Mammary epithelial cell (primary cell): ENCODE measurements at regions of chr22 and their contacts with region 1.

Region 1: DNA sequence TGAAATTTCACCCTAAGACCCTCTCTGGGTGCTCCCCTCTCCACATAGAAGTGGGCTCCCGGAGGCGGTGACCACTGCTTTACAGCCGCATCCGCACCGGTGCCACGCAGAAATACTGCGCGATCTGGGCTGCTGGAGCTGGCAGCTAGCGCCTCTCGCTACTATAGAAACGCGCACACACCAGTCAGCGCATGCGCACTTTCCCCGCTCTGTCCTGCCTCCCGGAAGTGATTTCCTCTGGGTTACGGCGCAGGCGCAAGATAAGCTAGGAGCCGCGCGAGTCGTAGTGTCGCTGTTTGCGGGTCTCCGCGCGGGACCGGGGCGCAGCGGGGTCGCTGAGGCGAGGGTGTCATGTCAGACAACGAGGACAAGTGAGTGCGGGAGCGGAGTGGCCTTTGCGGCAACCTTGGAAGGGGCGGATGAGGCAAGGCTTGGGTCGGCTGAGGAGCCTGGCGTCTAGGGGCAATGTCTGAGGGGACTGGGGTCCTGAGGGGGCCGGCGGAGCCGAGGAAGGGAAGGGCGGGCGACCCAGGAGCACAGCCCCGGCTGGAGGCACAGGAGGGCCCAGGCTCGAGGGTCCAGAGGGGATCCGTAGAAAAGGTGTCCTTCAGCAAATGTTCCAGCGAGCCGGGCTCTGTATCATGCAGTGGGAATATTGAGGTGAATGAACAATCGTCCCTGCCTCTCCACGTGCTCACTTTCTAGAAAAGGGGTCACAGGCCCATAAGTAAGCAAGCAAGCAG is at the starts of genes C22orf23 and POLR2F:
- DNase-seq: peak; percentile 89
- H3K4me3 ChIP-seq: peak within 1 kb of the TSS; percentile 67 to 83 (median 71)
- H3K27ac ChIP-seq: peak within 1 kb of the TSS; percentile 57
- H3K4me1 ChIP-seq: peaks cover 21% of the 10 kb centered on the region
- H3K27me3 ChIP-seq: no peaks in the 10 kb centered on the region
- CTCF ChIP-seq: no peak
- total RNA-seq, gene C22orf23: not detected
- total RNA-seq, gene POLR2F: 20.7 to 89.6 TPM

Region 2: GRCh38 chr22:37905534-37906363 is 47.9 kb before region 1 on chr22 and contains the start of gene MICALL1:
- CTCF ChIA-PET with region 1: no interaction called
- dilution Hi-C with region 1: no loop called
- in situ Hi-C with region 1: no loop called
- intact Hi-C with region 1: loop called (anchors 5 kb)
- DNase-seq: peak; percentile 87
- H3K4me3 ChIP-seq: peak within 1 kb of the TSS; percentile 72 to 93 (median 87)
- H3K27ac ChIP-seq: peak within 1 kb of the TSS; percentile 95
- H3K4me1 ChIP-seq: peaks cover 48% of the 10 kb centered on the region
- H3K27me3 ChIP-seq: no peaks in the 10 kb centered on the region
- CTCF ChIP-seq: no peak
- total RNA-seq, gene MICALL1: 247 to 249 TPM

Region 3: GRCh38 chr22:38009000-38009806 is 55.6 kb after region 1 on chr22:
- CTCF ChIA-PET with region 1: no interaction called
- dilution Hi-C with region 1: no loop called
- in situ Hi-C with region 1: no loop called
- intact Hi-C with region 1: no loop called
- DNase-seq: no peak
- H3K4me3 ChIP-seq: no peak overlapping the region
- H3K27ac ChIP-seq: no peak overlapping the region
- H3K4me1 ChIP-seq: no peaks in the 10 kb centered on the region
- H3K27me3 ChIP-seq: no peaks in the 10 kb centered on the region
- CTCF ChIP-seq: no peak

Region 4: GRCh38 chr22:38034274-38034882 is 80.8 kb after region 1 on chr22:
- CTCF ChIA-PET with region 1: interaction called, 4 read pairs
- dilution Hi-C with region 1: loop called (anchors 5 kb)
- in situ Hi-C with region 1: no loop called
- intact Hi-C with region 1: no loop called
- DNase-seq: peak; percentile 83
- H3K4me3 ChIP-seq: no peak overlapping the region
- H3K27ac ChIP-seq: no peak overlapping the region
- H3K4me1 ChIP-seq: peaks cover 28% of the 10 kb centered on the region
- H3K27me3 ChIP-seq: no peaks in the 10 kb centered on the region
- CTCF ChIP-seq: no peak